CD4-positive, alpha-beta T cell (primary cell): ENCODE measurements at regions of chr12 and their contacts with region 1.

Region 1: GRCh38 chr12:93378373-93379325 is 924 bp downstream of the NUDT4 start:
- DNase-seq: peak; percentile 33 to 86 (median 47)
- ATAC-seq: peak; percentile 54
- H3K4me3 ChIP-seq: peak overlapping the region; percentile 74
- H3K4me3 Mint-ChIP-seq: peak overlapping the region; percentile 100
- H3K27ac ChIP-seq: peak overlapping the region; percentile 85 to 88
- H3K27ac Mint-ChIP-seq: peak overlapping the region; percentile 99
- H3K4me1 ChIP-seq: peaks cover 36% of the 10 kb centered on the region
- H3K4me1 Mint-ChIP-seq: peaks cover 52% of the 10 kb centered on the region
- H3K27me3 ChIP-seq: no peaks in the 10 kb centered on the region
- H3K27me3 Mint-ChIP-seq: no peaks in the 10 kb centered on the region
- CTCF ChIP-seq: no peak

Region 2: GRCh38 chr12:92987362-92987761 is 391.3 kb before region 1 on chr12:
- CTCF ChIA-PET with region 1: no interaction called
- POLR2A ChIA-PET with region 1: no interaction called
- intact Hi-C with region 1: loop called in 1 of 2 experiments (anchors 5 kb)
- DNase-seq: peak in 4 of 14 experiments; percentile 13 to 73 (median 70)
- ATAC-seq: peak; percentile 81
- H3K4me3 ChIP-seq: no peak overlapping the region
- H3K4me3 Mint-ChIP-seq: peak overlapping the region; percentile 26
- H3K27ac ChIP-seq: no peak overlapping the region
- H3K27ac Mint-ChIP-seq: no peak overlapping the region
- H3K4me1 ChIP-seq: peaks cover 7% of the 10 kb centered on the region
- H3K4me1 Mint-ChIP-seq: peaks cover 12% of the 10 kb centered on the region
- H3K27me3 ChIP-seq: no peaks in the 10 kb centered on the region
- H3K27me3 Mint-ChIP-seq: no peaks in the 10 kb centered on the region
- CTCF ChIP-seq: peak; percentile 80

Region 3: DNA sequence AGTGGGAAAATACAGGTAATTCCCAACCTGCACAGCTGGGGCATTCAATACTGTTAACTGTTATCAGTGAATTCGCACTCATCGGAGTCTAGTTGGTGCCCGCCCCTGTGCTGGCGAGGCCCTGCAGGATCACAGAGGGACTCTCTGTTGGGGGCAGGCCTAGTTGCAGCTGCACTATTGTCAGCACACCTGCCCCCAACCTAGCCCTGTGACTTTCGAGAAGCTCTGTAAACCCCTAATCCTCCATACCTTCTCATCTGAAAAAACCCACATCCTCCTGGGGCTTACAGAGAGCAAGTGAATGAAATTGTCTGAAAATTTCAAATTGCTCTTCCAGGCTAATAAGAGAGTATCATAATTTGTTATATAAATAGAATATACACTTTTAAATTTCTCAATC is 133.1 kb before region 1 on chr12:
- CTCF ChIA-PET with region 1: no interaction called
- POLR2A ChIA-PET with region 1: interaction called, 6 read pairs
- intact Hi-C with region 1: loop called in 1 of 2 experiments (anchors 5 kb)
- DNase-seq: peak in 9 of 14 experiments; percentile 1 to 56 (median 45)
- ATAC-seq: peak; percentile 95
- H3K4me3 ChIP-seq: no peak overlapping the region
- H3K4me3 Mint-ChIP-seq: peak overlapping the region; percentile 66
- H3K27ac ChIP-seq: no peak overlapping the region
- H3K27ac Mint-ChIP-seq: peak overlapping the region; percentile 73
- H3K4me1 ChIP-seq: peaks cover 25% of the 10 kb centered on the region
- H3K4me1 Mint-ChIP-seq: peaks cover 57% of the 10 kb centered on the region
- H3K27me3 ChIP-seq: no peaks in the 10 kb centered on the region
- H3K27me3 Mint-ChIP-seq: no peaks in the 10 kb centered on the region
- CTCF ChIP-seq: no peak

Region 4: GRCh38 chr12:93325855-93326254 is 52.8 kb before region 1 on chr12:
- CTCF ChIA-PET with region 1: no interaction called
- POLR2A ChIA-PET with region 1: no interaction called
- intact Hi-C with region 1: no loop called
- DNase-seq: no peak
- ATAC-seq: no peak
- H3K4me3 ChIP-seq: no peak overlapping the region
- H3K4me3 Mint-ChIP-seq: no peak overlapping the region
- H3K27ac ChIP-seq: no peak overlapping the region
- H3K27ac Mint-ChIP-seq: no peak overlapping the region
- H3K4me1 ChIP-seq: no peaks in the 10 kb centered on the region
- H3K4me1 Mint-ChIP-seq: no peaks in the 10 kb centered on the region
- H3K27me3 ChIP-seq: no peaks in the 10 kb centered on the region
- H3K27me3 Mint-ChIP-seq: no peaks in the 10 kb centered on the region
- CTCF ChIP-seq: no peak

Region 5: DNA sequence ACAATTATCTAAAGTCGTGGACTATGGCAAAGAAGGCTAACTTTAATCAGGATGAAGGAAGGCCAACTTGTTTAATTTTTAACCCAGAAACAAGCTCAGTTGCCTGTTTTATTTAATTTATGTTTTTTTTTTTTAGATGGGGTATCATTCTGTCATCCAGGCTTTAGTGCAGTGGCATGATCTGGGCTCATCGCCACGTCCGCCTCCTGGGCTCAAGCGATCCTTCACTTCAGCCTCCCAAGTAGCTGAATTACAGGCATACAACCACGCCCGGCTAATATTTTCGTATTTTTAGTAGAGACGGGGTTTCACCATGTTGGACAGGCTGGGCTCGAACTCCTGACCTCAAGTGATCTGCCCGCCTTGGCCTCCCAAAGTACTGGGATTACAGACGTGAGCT is 18.8 kb after region 1 on chr12:
- CTCF ChIA-PET with region 1: interaction called, 10 read pairs
- POLR2A ChIA-PET with region 1: no interaction called
- intact Hi-C with region 1: no loop called
- DNase-seq: no peak
- ATAC-seq: no peak
- H3K4me3 ChIP-seq: no peak overlapping the region
- H3K4me3 Mint-ChIP-seq: no peak overlapping the region
- H3K27ac ChIP-seq: no peak overlapping the region
- H3K27ac Mint-ChIP-seq: no peak overlapping the region
- H3K4me1 ChIP-seq: no peaks in the 10 kb centered on the region
- H3K4me1 Mint-ChIP-seq: peaks cover 1% of the 10 kb centered on the region
- H3K27me3 ChIP-seq: no peaks in the 10 kb centered on the region
- H3K27me3 Mint-ChIP-seq: no peaks in the 10 kb centered on the region
- CTCF ChIP-seq: no peak

Region 6: GRCh38 chr12:93441617-93442410 is 63.2 kb after region 1 on chr12 and contains the start of gene UBE2N:
- CTCF ChIA-PET with region 1: no interaction called
- POLR2A ChIA-PET with region 1: interaction called, 6 read pairs
- intact Hi-C with region 1: loop called (anchors 5 kb)
- DNase-seq: peak; percentile 92 to 98 (median 95)
- ATAC-seq: peak; percentile 81
- H3K4me3 ChIP-seq: peak within 1 kb of the TSS; percentile 76
- H3K4me3 Mint-ChIP-seq: peak within 1 kb of the TSS; percentile 96
- H3K27ac ChIP-seq: peak within 1 kb of the TSS; percentile 89 to 91
- H3K27ac Mint-ChIP-seq: peak within 1 kb of the TSS; percentile 93
- H3K4me1 ChIP-seq: peaks cover 29% of the 10 kb centered on the region
- H3K4me1 Mint-ChIP-seq: peaks cover 53% of the 10 kb centered on the region
- H3K27me3 ChIP-seq: no peaks in the 10 kb centered on the region
- H3K27me3 Mint-ChIP-seq: no peaks in the 10 kb centered on the region
- CTCF ChIP-seq: no peak
- total RNA-seq, gene UBE2N: 89.8 to 101 TPM